Psoas muscle (tissue), 8 donors: ENCODE measurements at regions of chr1 and their contacts with region 1.

Region 1: DNA sequence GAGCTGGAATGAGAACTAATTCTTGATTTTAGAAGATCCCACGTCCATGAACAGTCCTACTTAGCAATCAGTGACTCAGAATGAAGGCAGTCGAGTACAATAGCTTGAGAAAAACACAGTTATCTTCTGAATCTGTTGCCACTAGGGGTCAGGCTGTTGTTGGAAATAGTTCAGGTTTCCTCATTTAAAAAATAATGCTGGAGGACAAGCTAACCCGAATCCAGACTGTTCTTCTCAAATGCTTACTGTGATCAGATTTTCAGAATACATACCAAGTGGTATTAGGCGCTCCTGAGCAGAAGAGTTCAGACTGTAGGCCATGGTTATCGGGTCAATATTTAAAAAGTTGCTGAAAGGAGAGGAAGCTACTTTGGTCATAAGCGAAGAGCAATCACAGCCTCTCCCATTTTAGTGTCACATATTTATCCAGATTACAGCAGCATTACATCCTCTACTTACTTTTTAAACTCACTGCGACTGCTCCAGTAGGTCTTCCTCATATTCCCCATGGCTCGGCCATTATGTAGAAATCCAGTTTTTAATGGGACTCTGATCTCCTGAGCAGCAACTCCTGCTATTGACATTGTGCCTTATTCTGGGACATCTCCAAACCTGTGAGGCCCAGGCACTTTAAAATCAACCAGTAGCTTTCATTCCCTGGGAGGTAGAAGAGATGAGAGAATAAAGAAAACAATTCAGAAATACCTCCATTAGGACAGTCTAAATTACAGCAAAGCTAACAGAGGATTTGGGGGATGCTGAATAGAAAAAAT is 10.9 kb downstream of the ERRFI1 start:
- DNase-seq: no peak
- ATAC-seq: peak in 2 of 4 donors; percentile 20 to 30
- H3K4me3 ChIP-seq: peak overlapping the region; percentile 1
- H3K27ac ChIP-seq: peak overlapping the region; percentile 62
- H3K4me1 ChIP-seq: peaks cover 78% of the 10 kb centered on the region
- H3K27me3 ChIP-seq: no peaks in the 10 kb centered on the region
- CTCF ChIP-seq: peak; percentile 71

Region 2: DNA sequence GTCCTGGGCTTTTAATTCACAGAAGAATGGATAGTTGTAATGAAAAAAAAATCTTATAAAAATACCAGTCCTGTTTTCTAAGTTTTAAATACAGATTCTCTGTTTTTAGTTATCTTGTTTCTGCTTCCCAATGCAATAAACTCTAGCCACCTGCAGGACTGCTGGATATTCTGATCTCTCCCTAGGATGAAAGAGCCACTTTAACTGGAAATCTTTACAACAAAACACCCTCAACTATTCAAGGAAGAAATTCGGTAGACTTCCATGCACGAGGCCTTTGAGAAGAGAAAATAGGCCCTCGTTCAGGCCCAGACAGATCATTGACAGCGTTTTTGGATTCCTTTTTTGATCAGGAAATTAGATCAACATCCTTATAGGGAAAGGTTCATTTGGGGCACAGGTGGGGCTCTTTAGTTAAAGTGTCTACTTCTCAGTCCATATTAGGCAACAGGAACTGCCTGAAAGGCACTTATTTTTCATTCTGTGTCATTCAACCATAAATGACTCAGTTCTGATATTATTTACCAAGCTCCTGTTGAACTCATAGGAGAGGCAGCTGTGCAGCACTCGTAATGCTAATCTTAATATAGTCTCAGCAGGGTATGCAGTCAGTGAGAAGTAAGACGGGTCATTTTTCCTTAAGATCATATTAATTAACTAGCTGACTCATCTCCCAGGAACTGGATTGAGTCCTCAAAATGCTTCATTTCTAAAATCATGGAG is 82.0 kb after region 1 on chr1:
- intact Hi-C with region 1: loop called in 1 of 2 experiments (anchors 5 kb)
- DNase-seq: no peak
- ATAC-seq: peak; percentile 69 to 89 (median 82)
- H3K4me3 ChIP-seq: no peak overlapping the region
- H3K27ac ChIP-seq: peak overlapping the region; percentile 76
- H3K4me1 ChIP-seq: peaks cover 22% of the 10 kb centered on the region
- H3K27me3 ChIP-seq: peaks cover 0 to 2% (median 0%) of the 10 kb centered on the region in 3 donors
- CTCF ChIP-seq: no peak

Region 3: GRCh38 chr1:8348777-8349491 is 333.7 kb after region 1 on chr1:
- intact Hi-C with region 1: loop called in 1 of 2 experiments (anchors 5 kb)
- DNase-seq: peak; percentile 75 to 88
- ATAC-seq: peak; percentile 53 to 76 (median 67)
- H3K4me3 ChIP-seq: no peak overlapping the region
- H3K27ac ChIP-seq: no peak overlapping the region
- H3K4me1 ChIP-seq: peaks cover 6% of the 10 kb centered on the region
- H3K27me3 ChIP-seq: no peaks in the 10 kb centered on the region
- CTCF ChIP-seq: peak; percentile 80